Activated CD4-positive, alpha-beta memory T cell treated with anti-CD3 and anti-CD28 coated beads for 36 hours (primary cell): ENCODE measurements at regions of chr14 and their contacts with region 1.

Region 1: GRCh38 chr14:39426605-39427004 is 5.6 kb downstream of the FBXO33 start:
- DNase-seq: no peak
- H3K4me3 Mint-ChIP-seq: no peak overlapping the region
- H3K27ac Mint-ChIP-seq: peak overlapping the region; percentile 13
- H3K4me1 Mint-ChIP-seq: peaks cover 61% of the 10 kb centered on the region
- H3K27me3 Mint-ChIP-seq: no peaks in the 10 kb centered on the region

Region 2: GRCh38 chr14:38721822-38722431 is 704.7 kb before region 1 on chr14:
- CTCF ChIA-PET with region 1: no interaction called
- POLR2A ChIA-PET with region 1: no interaction called
- intact Hi-C with region 1: loop called (anchors 5 kb)
- DNase-seq: peak; percentile 52
- H3K4me3 Mint-ChIP-seq: no peak overlapping the region
- H3K27ac Mint-ChIP-seq: no peak overlapping the region
- H3K4me1 Mint-ChIP-seq: no peaks in the 10 kb centered on the region
- H3K27me3 Mint-ChIP-seq: no peaks in the 10 kb centered on the region

Region 3: DNA sequence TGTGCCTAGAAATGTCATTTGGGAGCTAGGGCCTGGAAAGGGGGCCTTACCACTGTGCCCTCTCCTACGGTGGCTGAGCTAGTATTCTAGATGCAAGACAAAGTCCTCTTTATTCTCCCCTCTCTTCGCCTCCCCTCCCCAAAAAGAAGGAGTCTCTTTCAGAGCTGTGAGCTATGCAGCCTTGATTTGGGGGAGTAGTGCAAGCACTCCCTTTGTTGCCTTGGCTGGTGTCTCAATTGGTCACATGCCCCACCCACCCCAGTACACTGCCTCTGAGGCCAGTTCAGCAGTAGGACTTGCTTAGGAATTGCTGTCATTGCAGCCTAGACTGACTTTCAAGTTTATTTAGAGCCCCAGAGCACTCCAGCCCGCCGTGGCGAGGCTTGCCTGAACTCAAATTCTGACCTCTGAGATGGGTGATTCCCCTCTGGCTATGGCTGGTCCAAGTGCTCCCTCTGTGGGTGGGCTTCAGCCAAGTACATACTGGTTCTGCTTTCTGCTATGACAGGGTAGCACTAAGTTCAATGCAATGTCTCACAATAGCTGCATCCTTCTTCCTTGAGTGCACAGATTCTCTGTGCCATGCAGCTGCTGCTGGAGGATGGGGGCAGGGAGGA is 42.6 kb after region 1 on chr14:
- CTCF ChIA-PET with region 1: no interaction called
- POLR2A ChIA-PET with region 1: no interaction called
- intact Hi-C with region 1: no loop called
- DNase-seq: peak; percentile 55
- H3K4me3 Mint-ChIP-seq: no peak overlapping the region
- H3K27ac Mint-ChIP-seq: no peak overlapping the region
- H3K4me1 Mint-ChIP-seq: no peaks in the 10 kb centered on the region
- H3K27me3 Mint-ChIP-seq: peaks cover 4% of the 10 kb centered on the region